Activated B cell treated with CpG ODN at 0.5 μM for 24 hours (primary cell): ENCODE measurements at regions of chr2 and their contacts with region 1.

Region 1: DNA sequence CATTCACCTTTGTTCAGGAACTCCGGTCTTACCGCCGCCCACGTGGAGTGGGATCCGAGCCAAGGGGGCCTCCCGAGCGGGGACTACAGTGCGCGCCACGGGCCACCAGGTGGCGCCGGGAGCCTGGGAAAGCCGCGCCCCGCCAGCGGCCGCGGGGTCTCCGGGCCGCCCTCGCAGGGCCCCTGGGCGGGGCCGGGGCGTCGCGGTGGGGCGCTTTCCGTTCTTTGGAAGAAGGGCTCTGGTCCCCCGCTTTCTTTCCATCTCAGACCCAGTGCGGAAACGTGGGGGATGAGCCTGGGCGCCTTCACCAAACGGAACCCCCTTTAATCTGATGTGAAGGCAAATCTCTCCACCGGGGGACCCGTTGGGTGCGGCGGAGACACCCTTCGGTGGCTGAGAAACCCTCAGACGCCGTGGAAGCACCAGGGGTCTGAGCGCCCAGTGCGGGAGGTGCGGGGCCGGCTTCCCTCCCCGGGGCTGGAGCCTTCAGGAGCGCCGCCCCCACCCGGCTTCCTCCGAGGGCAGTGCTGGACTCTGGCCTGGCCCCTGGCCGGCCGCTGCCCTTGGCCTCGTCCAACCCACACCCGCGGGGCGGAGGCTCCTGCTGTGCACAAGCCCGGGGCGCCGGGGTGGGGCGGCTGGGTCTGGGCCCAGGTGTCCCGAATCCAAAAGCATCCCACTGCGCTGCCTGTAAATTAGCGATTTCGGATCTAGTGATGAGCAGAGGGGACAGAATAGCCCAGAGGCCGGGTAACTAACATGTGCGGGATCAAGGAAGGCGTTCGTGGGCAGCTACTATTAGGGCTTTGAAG is 44.6 kb downstream of the GORASP2 start:
- DNase-seq: peak; percentile 90
- ATAC-seq: peak; percentile 96
- H3K4me3 Mint-ChIP-seq: peak overlapping the region; percentile 87
- H3K27ac Mint-ChIP-seq: peak overlapping the region; percentile 81
- H3K4me1 Mint-ChIP-seq: peaks cover 15% of the 10 kb centered on the region
- H3K27me3 Mint-ChIP-seq: no peaks in the 10 kb centered on the region
- CTCF ChIP-seq: peak; percentile 80

Region 2: GRCh38 chr2:170922634-170923494 is 50.8 kb before region 1 on chr2:
- CTCF ChIA-PET with region 1: no interaction called
- POLR2A ChIA-PET with region 1: no interaction called
- intact Hi-C with region 1: no loop called
- DNase-seq: no peak
- ATAC-seq: peak; percentile 64
- H3K4me3 Mint-ChIP-seq: no peak overlapping the region
- H3K27ac Mint-ChIP-seq: no peak overlapping the region
- H3K4me1 Mint-ChIP-seq: no peaks in the 10 kb centered on the region
- H3K27me3 Mint-ChIP-seq: no peaks in the 10 kb centered on the region
- CTCF ChIP-seq: no peak

Region 3: GRCh38 chr2:171086352-171087290 is 112.9 kb after region 1 on chr2:
- CTCF ChIA-PET with region 1: interaction called, 7 read pairs
- POLR2A ChIA-PET with region 1: no interaction called
- intact Hi-C with region 1: loop called (anchors 1 kb)
- DNase-seq: no peak
- ATAC-seq: peak; percentile 57
- H3K4me3 Mint-ChIP-seq: no peak overlapping the region
- H3K27ac Mint-ChIP-seq: peak overlapping the region; percentile 7
- H3K4me1 Mint-ChIP-seq: peaks cover 36% of the 10 kb centered on the region
- H3K27me3 Mint-ChIP-seq: no peaks in the 10 kb centered on the region
- CTCF ChIP-seq: peak; percentile 67

Region 4: GRCh38 chr2:171416009-171416926 is 442.6 kb after region 1 on chr2:
- CTCF ChIA-PET with region 1: interaction called, 42 read pairs
- POLR2A ChIA-PET with region 1: interaction called, 5 read pairs
- intact Hi-C with region 1: loop called (anchors 1 kb)
- DNase-seq: peak; percentile 52
- ATAC-seq: peak; percentile 97
- H3K4me3 Mint-ChIP-seq: peak overlapping the region; percentile 3
- H3K27ac Mint-ChIP-seq: peak overlapping the region; percentile 82
- H3K4me1 Mint-ChIP-seq: peaks cover 19% of the 10 kb centered on the region
- H3K27me3 Mint-ChIP-seq: no peaks in the 10 kb centered on the region
- CTCF ChIP-seq: peak; percentile 94

Region 5: GRCh38 chr2:171447675-171448074 is 474.0 kb after region 1 on chr2:
- CTCF ChIA-PET with region 1: interaction called, 4 read pairs
- POLR2A ChIA-PET with region 1: no interaction called
- intact Hi-C with region 1: loop called (anchors 1 kb)
- DNase-seq: no peak
- ATAC-seq: no peak
- H3K4me3 Mint-ChIP-seq: no peak overlapping the region
- H3K27ac Mint-ChIP-seq: no peak overlapping the region
- H3K4me1 Mint-ChIP-seq: no peaks in the 10 kb centered on the region
- H3K27me3 Mint-ChIP-seq: no peaks in the 10 kb centered on the region
- CTCF ChIP-seq: no peak

Region 6: DNA sequence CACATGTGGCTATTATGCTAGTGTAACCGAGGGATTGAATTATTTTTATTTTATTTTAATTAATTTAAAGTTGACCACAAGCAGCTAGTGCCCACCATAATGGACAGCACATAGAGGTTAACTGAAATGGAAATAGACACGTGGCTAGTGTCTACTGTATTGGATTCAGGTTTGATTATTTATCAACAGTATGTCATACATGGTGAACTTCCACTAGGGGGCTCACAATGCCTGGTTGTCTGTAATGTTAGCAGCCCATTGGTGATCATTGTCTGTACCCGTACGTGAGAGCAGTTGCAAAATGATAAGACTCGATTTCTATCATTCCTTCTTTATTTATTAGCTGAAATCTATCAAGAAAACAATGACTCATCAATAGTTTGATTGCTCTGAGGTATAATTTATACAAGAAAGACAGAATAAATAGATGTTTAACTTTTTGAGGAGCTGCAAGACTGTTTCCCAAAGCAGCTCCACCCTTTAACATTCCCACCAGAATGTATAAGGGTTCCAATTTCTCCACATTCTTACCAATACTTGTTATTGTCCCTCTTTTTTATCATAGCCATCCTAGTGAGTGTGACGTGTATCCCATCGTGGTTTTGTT is 625.1 kb after region 1 on chr2:
- CTCF ChIA-PET with region 1: no interaction called
- POLR2A ChIA-PET with region 1: no interaction called
- intact Hi-C with region 1: loop called (anchors 1 kb)
- DNase-seq: no peak
- ATAC-seq: peak; percentile 96
- H3K4me3 Mint-ChIP-seq: no peak overlapping the region
- H3K27ac Mint-ChIP-seq: no peak overlapping the region
- H3K4me1 Mint-ChIP-seq: peaks cover 3% of the 10 kb centered on the region
- H3K27me3 Mint-ChIP-seq: peaks cover 4% of the 10 kb centered on the region
- CTCF ChIP-seq: no peak

Region 7: DNA sequence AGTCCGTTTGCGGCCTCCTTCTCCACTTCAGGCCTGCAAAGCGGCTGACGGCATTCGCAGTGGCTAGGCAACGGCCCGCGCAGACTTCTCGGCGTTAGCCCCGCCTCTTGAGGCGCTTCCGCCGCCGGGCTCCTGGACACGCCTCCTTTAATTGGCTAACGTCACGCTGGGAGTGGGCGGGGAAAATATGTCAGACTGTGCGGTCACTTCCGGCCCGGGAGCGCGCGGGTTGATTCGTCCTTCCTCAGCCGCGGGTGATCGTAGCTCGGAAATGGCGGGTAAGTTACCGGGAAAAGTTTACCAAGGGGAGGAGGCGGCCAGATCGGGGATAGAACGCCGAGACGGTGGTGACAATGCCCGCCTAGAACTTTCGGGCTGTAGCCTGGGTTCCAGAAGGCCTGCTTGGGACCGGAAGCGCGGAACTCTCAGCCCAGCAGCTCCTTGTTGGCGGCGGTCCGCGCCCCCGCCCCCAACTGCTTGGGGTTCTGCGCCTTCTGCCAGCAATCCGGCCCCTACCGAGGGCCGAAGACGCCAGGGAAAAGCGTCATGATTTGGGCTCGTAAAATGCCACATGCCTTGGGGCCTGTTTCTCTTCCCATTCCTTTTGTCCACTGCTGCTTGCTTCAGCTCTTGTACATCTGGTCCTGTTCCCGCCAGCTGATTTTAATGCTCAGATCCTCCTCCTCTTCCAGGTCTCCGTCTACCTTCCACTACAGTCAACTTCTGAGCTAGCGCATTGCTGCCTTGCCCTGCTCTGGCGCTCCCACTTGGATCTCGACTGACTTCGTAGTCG is 948.7 kb after region 1 on chr2 and contains the start of gene HAT1:
- CTCF ChIA-PET with region 1: no interaction called
- POLR2A ChIA-PET with region 1: no interaction called
- intact Hi-C with region 1: loop called (anchors 10 kb)
- DNase-seq: peak; percentile 94
- ATAC-seq: peak; percentile 97
- H3K4me3 Mint-ChIP-seq: peak within 1 kb of the TSS; percentile 100
- H3K27ac Mint-ChIP-seq: peak within 1 kb of the TSS; percentile 99
- H3K4me1 Mint-ChIP-seq: peaks cover 33% of the 10 kb centered on the region
- H3K27me3 Mint-ChIP-seq: no peaks in the 10 kb centered on the region
- CTCF ChIP-seq: no peak
- total RNA-seq, gene HAT1: 35.9 and 36.2 TPM in 2 replicates